ENCODE measurements at regions of chr5 and their contacts with region 1.

Region 1: GRCh38 chr5:114038756-114039155 is 323.1 kb upstream of the KCNN2 start:
- DNase-seq: no peak
- H3K4me3 Mint-ChIP-seq: no peak overlapping the region
- H3K27ac Mint-ChIP-seq: no peak overlapping the region
- H3K4me1 Mint-ChIP-seq: no peaks in the 10 kb centered on the region
- H3K27me3 Mint-ChIP-seq: peaks cover 16% of the 10 kb centered on the region
- CTCF ChIP-seq: no peak

Region 2: GRCh38 chr5:114544561-114544960 is 505.8 kb after region 1 on chr5:
- CTCF ChIA-PET with region 1: no interaction called
- POLR2A ChIA-PET with region 1: no interaction called
- intact Hi-C with region 1: loop called (anchors 5 kb)
- DNase-seq: no peak
- H3K4me3 Mint-ChIP-seq: no peak overlapping the region
- H3K27ac Mint-ChIP-seq: no peak overlapping the region
- H3K4me1 Mint-ChIP-seq: no peaks in the 10 kb centered on the region
- H3K27me3 Mint-ChIP-seq: no peaks in the 10 kb centered on the region
- CTCF ChIP-seq: no peak

Measured in MCF 10A (cell line).